Activated CD4-positive, alpha-beta T cell treated with anti-CD3 and anti-CD28 coated beads, Interleukin-2, amount 10 ng/mL, durations not matched to agents 24 days and 14 days (primary cell): ENCODE measurements at regions of chr9 and their contacts with region 1.

Region 1: GRCh38 chr9:129460323-129461261 is 160.3 kb downstream of the C9orf50 start:
- DNase-seq: peak; percentile 96
- H3K4me3 Mint-ChIP-seq: peak overlapping the region; percentile 83
- H3K27ac Mint-ChIP-seq: peak overlapping the region; percentile 93
- H3K4me1 Mint-ChIP-seq: peaks cover 39% of the 10 kb centered on the region
- H3K27me3 Mint-ChIP-seq: no peaks in the 10 kb centered on the region

Region 2: DNA sequence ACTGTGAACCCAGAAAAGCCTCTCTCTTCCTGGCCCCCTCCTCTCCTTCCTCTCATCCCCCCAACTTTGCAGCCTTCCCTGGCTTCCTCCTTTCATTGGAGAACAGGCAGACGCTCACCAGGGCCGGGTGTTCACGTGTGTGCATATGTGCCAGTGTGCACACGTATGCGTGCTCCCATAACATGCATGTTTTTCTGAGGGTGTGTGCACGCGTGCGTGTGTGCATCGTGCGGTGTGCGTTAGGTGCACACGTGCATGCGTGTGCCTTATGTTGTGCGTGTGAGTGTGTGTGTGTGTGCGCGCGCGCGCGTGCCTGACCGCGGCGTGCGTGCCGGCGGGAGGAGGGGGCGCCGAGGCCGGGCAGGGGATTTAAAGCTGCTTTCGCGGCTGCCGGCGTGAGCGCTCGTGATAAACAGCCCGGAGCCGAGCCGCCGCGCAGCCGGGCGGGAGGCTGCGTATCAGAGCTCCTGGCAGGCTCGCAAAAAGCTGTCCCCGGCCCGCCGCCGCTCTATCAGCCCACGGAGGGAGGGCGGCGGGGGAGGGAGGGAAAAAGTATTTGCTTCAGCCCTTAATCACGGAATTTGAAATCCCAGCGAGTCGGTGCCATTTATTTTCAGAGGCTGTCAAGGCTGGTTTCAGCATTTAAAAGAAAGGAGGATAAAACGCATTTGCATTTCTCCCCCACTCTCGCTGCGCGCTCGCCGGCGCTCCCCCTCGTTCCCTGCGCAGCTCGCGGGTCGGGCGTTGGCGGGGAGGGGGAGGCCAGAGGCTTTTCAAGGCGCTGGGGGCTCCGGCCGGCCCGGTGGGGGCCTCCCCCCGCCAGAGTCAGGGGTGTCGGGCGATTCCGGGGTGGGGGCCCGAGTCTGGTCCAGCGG is 23.6 kb before region 1 on chr9:
- intact Hi-C with region 1: loop called (anchors 2 kb)
- DNase-seq: peak; percentile 82
- H3K4me3 Mint-ChIP-seq: peak overlapping the region; percentile 76
- H3K27ac Mint-ChIP-seq: peak overlapping the region; percentile 9
- H3K4me1 Mint-ChIP-seq: peaks cover 11% of the 10 kb centered on the region
- H3K27me3 Mint-ChIP-seq: peaks cover 66% of the 10 kb centered on the region

Region 3: DNA sequence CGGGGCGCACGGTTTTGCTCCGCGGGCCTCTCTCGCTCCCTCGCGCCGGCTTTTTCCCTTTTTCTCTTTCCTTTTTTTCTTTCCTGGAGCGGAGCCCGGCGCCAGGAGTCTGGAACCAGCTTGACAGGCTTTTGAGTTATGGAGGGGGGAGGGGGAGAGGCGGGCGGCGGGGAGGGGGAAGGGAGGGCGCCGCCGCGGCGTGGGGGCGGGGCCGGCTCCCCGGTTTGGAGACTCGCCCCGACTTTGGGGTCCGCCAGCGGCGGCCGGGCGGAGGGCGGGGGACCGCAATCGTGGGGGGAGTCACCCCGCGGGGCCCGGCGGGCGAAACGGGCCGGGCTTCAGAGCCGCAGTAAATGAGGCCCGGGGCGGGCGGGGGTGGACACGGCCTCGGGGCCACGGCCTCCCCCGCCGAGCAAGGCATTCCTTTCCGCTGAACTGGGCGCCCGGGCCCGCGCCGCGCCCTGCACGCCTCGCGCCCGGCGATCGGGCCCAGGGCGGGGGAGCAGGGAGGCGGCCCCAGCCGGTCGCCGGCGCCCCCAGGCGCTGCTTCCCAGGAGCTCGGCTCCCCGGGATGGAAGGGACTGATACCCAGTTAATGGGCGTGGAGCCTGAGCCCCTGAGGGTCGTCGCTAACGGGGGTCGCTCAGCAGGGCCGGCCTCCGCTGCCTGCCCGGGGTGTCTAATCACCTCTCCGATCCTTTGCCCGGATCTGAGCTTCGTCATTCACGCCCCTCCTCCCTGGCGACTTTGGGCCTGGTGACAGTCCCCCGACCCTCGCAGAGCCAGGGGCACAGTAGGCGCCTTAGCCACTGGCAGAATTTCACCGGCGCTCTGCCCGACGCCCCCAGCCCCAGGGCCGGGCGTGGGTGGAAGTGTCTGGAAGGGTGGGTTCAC is 22.2 kb after region 1 on chr9:
- intact Hi-C with region 1: loop called (anchors 1 kb)
- DNase-seq: peak; percentile 81
- H3K4me3 Mint-ChIP-seq: peak overlapping the region; percentile 74
- H3K27ac Mint-ChIP-seq: peak overlapping the region; percentile 76
- H3K4me1 Mint-ChIP-seq: peaks cover 38% of the 10 kb centered on the region
- H3K27me3 Mint-ChIP-seq: no peaks in the 10 kb centered on the region

Region 4: DNA sequence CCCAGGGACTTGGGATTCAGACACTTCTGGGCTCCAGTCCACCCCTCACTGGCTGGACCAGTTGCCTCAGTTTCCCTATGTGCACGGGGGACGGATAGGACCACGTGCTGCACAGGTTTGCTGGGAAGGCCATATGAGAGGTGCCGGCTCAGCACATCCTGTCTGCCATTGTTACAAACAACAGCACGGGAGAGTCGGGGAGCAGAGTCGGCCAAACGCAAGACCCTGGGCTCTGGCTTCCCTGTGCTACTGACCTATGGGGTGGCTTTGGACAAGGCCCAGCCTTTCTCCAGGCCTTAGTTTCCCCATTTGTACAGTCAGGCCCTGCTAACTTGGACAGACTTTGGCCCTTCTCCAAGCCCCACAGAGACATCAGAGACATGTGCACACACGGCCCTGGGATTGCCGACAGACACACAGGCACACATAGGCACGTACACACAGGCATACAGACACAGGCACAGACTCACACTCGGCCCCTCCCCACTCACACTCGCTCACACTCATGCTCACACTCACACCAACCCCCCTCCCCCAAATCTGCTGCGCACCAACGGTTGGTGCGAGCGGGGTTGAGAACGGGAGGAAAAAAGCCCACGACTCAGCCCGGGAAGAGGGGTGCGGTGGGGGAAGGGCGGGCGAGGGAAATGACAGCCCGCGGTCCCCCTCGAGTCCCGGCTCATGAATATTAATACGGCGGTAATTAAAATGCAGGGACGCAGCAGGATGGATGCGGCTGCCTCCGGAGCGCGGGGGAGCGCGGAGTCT is 27.2 kb after region 1 on chr9:
- intact Hi-C with region 1: loop called (anchors 1 kb)
- DNase-seq: peak; percentile 79
- H3K4me3 Mint-ChIP-seq: peak overlapping the region; percentile 92
- H3K27ac Mint-ChIP-seq: peak overlapping the region; percentile 96
- H3K4me1 Mint-ChIP-seq: peaks cover 61% of the 10 kb centered on the region
- H3K27me3 Mint-ChIP-seq: no peaks in the 10 kb centered on the region